Caco-2 (cell line): ENCODE measurements at regions of chr5 and their contacts with region 1.

Region 1: DNA sequence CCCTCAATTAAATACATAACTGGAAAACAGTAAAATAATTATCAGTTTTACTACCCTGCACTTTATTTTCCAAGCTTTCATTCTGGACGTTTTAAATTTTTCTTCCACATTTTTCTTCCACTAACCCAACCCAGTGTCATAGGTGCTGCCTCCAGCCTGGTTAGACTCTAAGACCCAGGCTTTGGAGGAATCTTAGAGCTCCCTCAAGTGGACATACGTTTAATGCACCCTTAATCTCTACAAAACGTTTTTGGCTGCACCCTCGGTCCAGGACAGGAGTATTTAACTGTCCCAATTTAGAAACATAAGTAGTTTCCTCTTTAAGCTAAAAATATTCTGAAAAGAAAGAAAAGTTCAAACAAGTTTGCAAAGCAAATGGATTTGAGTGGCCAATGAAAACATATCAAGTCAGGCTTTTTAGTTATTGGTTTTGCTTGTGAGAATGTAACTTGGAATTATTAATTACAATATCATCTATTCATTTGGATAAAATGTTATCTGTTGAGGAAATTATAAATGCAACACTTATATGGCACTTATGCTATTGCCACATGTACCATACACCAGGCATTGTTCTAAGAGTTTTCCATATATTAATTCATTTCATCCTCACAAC is 38.9 kb downstream of the CDH6 start:
- DNase-seq: peak; percentile 44 to 71
- H3K4me3 ChIP-seq: no peak overlapping the region
- H3K4me3 Mint-ChIP-seq: no peak overlapping the region
- H3K27ac Mint-ChIP-seq: peak overlapping the region; percentile 13
- H3K4me1 ChIP-seq: peaks cover 5% of the 10 kb centered on the region
- H3K4me1 Mint-ChIP-seq: peaks cover 13% of the 10 kb centered on the region
- H3K27me3 ChIP-seq: no peaks in the 10 kb centered on the region
- H3K27me3 Mint-ChIP-seq: no peaks in the 10 kb centered on the region
- CTCF ChIP-seq: peak; percentile 62 to 79

Region 2: DNA sequence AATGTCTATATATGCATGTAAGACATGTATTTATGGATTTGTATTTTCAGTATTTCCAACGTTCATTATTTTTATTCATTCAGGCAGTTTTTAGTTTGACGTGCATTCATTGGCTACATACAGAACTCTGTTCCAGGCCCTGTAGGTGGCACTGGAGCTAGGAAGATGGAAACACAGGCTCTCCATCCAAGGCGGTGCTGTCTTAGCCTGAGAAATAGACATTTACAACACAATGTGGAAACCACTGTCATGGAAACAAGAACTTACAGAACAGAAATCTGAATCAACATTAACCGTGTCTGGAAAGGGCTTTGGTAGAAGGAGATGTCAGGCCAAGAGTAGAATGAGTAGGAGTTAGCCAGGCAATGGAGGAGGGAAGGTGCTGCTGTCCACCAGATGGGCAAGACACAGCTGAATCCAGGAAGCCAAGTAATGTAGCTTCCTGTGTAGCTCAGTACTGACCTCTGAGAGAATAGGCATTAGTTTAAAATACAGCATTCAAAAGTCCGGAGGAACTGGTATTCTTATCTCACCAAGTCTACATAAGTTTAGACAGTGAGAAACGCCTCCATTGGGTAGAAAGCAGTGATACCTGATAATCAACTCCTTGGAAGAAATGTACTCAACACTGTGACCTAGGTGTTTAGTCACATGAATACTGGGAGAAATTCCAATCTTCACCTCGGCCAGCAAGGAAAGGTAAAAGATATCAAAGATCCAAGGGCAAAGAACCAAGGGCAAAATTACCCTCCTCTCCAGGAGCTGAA is 427.5 kb before region 1 on chr5:
- CTCF ChIA-PET with region 1: no interaction called
- POLR2A ChIA-PET with region 1: no interaction called
- intact Hi-C with region 1: loop called (anchors 1 kb)
- DNase-seq: no peak
- H3K4me3 ChIP-seq: no peak overlapping the region
- H3K4me3 Mint-ChIP-seq: no peak overlapping the region
- H3K27ac Mint-ChIP-seq: no peak overlapping the region
- H3K4me1 ChIP-seq: no peaks in the 10 kb centered on the region
- H3K4me1 Mint-ChIP-seq: peaks cover 6% of the 10 kb centered on the region
- H3K27me3 ChIP-seq: no peaks in the 10 kb centered on the region
- H3K27me3 Mint-ChIP-seq: peaks cover 6% of the 10 kb centered on the region
- CTCF ChIP-seq: peak in 1 of 2 experiments; percentile 29

Region 3: GRCh38 chr5:31186672-31187267 is 45.6 kb before region 1 on chr5:
- CTCF ChIA-PET with region 1: interaction called, 3 read pairs
- POLR2A ChIA-PET with region 1: no interaction called
- intact Hi-C with region 1: loop called (anchors 2 kb)
- DNase-seq: peak in 1 of 2 experiments; percentile 51
- H3K4me3 ChIP-seq: no peak overlapping the region
- H3K4me3 Mint-ChIP-seq: no peak overlapping the region
- H3K27ac Mint-ChIP-seq: no peak overlapping the region
- H3K4me1 ChIP-seq: no peaks in the 10 kb centered on the region
- H3K4me1 Mint-ChIP-seq: peaks cover 6% of the 10 kb centered on the region
- H3K27me3 ChIP-seq: no peaks in the 10 kb centered on the region
- H3K27me3 Mint-ChIP-seq: no peaks in the 10 kb centered on the region
- CTCF ChIP-seq: peak; percentile 72 to 80

Region 4: DNA sequence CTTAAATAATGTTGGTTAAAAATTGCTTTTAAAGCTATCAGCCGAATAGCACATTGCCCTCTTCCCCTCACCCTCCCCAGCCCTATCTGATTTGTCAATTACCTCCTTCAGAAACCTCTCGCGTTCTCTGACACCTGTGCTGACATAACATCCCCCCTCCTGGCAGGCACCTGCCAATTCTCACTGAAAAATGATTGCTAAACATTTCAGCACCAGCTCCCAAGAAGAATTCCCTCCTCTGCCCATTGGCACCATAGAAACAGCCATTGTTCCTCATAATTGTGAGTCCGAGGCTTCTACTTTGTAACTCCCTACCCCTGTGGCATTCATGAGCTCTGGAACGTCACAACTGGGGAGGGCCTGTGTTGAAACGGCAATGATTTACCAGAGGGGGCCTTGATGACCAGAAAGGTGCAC is 18.7 kb before region 1 on chr5:
- CTCF ChIA-PET with region 1: interaction called, 10 read pairs
- POLR2A ChIA-PET with region 1: no interaction called
- intact Hi-C with region 1: loop called (anchors 1 kb)
- DNase-seq: peak; percentile 77 to 81
- H3K4me3 ChIP-seq: peak overlapping the region; percentile 28
- H3K4me3 Mint-ChIP-seq: peak overlapping the region; percentile 87
- H3K27ac Mint-ChIP-seq: peak overlapping the region; percentile 97
- H3K4me1 ChIP-seq: peaks cover 61% of the 10 kb centered on the region
- H3K4me1 Mint-ChIP-seq: peaks cover 19% of the 10 kb centered on the region
- H3K27me3 ChIP-seq: no peaks in the 10 kb centered on the region
- H3K27me3 Mint-ChIP-seq: no peaks in the 10 kb centered on the region
- CTCF ChIP-seq: peak in 1 of 2 experiments; percentile 12

Region 5: DNA sequence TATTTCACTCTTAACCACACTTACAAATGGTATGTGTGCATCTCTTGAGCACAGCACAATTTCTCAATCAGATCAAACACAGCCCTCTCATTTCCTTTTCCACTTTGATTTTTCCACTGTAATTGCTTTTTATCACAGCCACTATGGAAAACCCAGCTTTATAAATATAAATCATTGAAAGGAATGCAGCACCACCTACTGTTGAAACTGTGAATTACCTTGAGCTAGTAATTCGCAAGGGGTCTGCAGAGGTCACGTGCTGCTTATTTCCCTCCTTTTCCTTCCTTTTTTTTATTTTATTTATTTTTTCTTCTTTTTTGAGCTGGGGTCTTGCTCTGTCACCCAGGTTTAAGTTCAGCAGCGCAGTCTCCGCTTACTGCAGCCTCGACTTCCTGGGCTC is 38.0 kb after region 1 on chr5:
- CTCF ChIA-PET with region 1: interaction called, 12 read pairs
- POLR2A ChIA-PET with region 1: no interaction called
- intact Hi-C with region 1: loop called (anchors 1 kb)
- DNase-seq: peak in 1 of 2 experiments; percentile 20
- H3K4me3 ChIP-seq: no peak overlapping the region
- H3K4me3 Mint-ChIP-seq: no peak overlapping the region
- H3K27ac Mint-ChIP-seq: no peak overlapping the region
- H3K4me1 ChIP-seq: no peaks in the 10 kb centered on the region
- H3K4me1 Mint-ChIP-seq: no peaks in the 10 kb centered on the region
- H3K27me3 ChIP-seq: no peaks in the 10 kb centered on the region
- H3K27me3 Mint-ChIP-seq: no peaks in the 10 kb centered on the region
- CTCF ChIP-seq: peak; percentile 45 to 73

Region 6: GRCh38 chr5:31492869-31493268 is 260.5 kb after region 1 on chr5:
- CTCF ChIA-PET with region 1: no interaction called
- POLR2A ChIA-PET with region 1: no interaction called
- intact Hi-C with region 1: no loop called
- DNase-seq: no peak
- H3K4me3 ChIP-seq: no peak overlapping the region
- H3K4me3 Mint-ChIP-seq: no peak overlapping the region
- H3K27ac Mint-ChIP-seq: no peak overlapping the region
- H3K4me1 ChIP-seq: no peaks in the 10 kb centered on the region
- H3K4me1 Mint-ChIP-seq: no peaks in the 10 kb centered on the region
- H3K27me3 ChIP-seq: no peaks in the 10 kb centered on the region
- H3K27me3 Mint-ChIP-seq: no peaks in the 10 kb centered on the region
- CTCF ChIP-seq: no peak